K562 (cell line): ENCODE measurements at regions of chrX and their contacts with region 1.

Region 1: DNA sequence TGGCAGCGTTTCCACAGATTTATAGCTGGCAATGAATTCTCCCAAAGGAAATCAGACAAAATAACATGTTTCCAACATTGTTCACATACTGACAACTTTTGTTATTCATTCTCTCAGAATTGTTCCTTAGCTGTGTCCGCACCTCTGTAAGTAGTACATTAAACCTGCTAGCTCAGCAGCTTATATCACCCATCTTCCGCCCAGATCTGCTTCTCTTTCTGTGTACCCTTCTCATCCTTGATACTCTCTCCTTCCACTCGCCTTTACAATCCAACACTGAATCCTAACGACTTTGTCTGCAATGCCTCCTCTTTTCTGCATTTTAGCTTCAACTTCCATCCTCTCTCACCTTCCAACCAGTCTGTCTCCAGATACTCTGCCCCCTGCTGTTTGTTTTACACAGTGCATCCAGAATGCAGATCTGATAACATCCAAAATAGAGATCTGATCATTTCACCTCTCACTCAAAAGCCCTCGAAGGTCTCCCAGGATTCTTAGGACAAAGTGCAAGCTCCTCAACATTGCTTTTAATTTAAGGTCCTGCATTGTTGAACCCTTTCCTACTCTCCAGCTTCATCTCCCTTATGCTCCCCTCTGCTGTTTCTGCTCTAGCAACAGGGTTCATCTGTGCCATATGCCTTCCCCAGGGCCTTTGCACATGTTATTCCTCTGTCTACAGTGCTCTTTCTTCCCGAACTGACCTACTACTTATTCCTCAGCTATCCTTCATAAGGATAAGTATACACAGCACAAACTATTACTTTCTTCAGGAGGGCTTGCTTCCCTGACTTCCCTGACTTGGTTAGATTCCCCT is 67.3 kb upstream of the VBP1 start:
- DNase-seq: peak; percentile 14 to 34 (median 27)
- ATAC-seq: peak; percentile 63
- H3K4me3 ChIP-seq: no peak overlapping the region
- H3K27ac ChIP-seq: no peak overlapping the region
- H3K4me1 ChIP-seq: peaks cover 0 to 17% of the 10 kb centered on the region in 2 experiments; a peak in 4 of 5 replicates
- H3K27me3 ChIP-seq: no peaks in the 10 kb centered on the region
- CTCF ChIP-seq: peak; percentile 48 to 69 (median 58); a peak in 5 of 6 replicates
- EP300 ChIP-seq: no peak
- POLR2A ChIP-seq: no peak
- RAD21 ChIP-seq: peak; percentile 22 to 51; a peak in 2 of 4 replicates

Region 2: GRCh38 chrX:155009994-155010472 is 138.9 kb before region 1 on chrX:
- CTCF ChIA-PET with region 1: no interaction called
- POLR2A ChIA-PET with region 1: no interaction called
- in situ Hi-C with region 1: loop called (anchors 5 kb)
- intact Hi-C with region 1: no loop called
- DNase-seq: no peak
- ATAC-seq: no peak
- H3K4me3 ChIP-seq: no peak overlapping the region
- H3K27ac ChIP-seq: 0 out of 3 replicates have a peak overlapping the region, but pooled peaks have one; percentile 25
- H3K4me1 ChIP-seq: peaks cover 21 to 24% of the 10 kb centered on the region in 2 experiments; a peak in 4 of 5 replicates
- H3K27me3 ChIP-seq: no peaks in the 10 kb centered on the region
- CTCF ChIP-seq: no peak
- EP300 ChIP-seq: no peak
- POLR2A ChIP-seq: no peak
- RAD21 ChIP-seq: no peak

Region 3: DNA sequence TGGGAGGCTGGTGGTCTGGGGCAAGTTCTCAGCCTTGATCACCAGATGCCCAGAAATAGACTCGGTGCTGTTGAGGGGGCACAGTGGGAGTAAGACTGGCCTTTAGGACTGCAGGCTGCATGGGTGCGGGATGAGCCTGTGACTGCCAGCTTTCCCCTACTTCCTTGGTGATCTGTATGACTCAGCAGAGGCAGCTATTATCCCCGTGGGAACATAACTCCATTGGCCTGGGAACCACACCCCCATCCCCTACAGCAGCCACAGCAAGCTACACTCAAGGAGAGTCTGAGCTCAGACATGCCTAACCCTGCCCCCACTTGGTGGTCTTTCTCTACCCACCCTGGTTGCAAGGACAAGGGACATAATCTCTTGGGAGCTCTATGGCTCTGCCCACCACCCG is 164.8 kb after region 1 on chrX:
- CTCF ChIA-PET with region 1: no interaction called
- POLR2A ChIA-PET with region 1: no interaction called
- in situ Hi-C with region 1: no loop called
- intact Hi-C with region 1: no loop called
- DNase-seq: peak in 1 of 4 experiments; percentile 30
- ATAC-seq: peak; percentile 49; the same call in 2 of the 3 replicates
- H3K4me3 ChIP-seq: no peak overlapping the region
- H3K27ac ChIP-seq: no peak overlapping the region
- H3K4me1 ChIP-seq: no peaks in the 10 kb centered on the region; a peak in 1 of 5 replicates
- H3K27me3 ChIP-seq: no peaks in the 10 kb centered on the region
- CTCF ChIP-seq: no peak
- EP300 ChIP-seq: no peak
- POLR2A ChIP-seq: no peak
- RAD21 ChIP-seq: no peak